HepG2 (cell line): ENCODE measurements at regions of chr9 and their contacts with region 1.

Region 1: DNA sequence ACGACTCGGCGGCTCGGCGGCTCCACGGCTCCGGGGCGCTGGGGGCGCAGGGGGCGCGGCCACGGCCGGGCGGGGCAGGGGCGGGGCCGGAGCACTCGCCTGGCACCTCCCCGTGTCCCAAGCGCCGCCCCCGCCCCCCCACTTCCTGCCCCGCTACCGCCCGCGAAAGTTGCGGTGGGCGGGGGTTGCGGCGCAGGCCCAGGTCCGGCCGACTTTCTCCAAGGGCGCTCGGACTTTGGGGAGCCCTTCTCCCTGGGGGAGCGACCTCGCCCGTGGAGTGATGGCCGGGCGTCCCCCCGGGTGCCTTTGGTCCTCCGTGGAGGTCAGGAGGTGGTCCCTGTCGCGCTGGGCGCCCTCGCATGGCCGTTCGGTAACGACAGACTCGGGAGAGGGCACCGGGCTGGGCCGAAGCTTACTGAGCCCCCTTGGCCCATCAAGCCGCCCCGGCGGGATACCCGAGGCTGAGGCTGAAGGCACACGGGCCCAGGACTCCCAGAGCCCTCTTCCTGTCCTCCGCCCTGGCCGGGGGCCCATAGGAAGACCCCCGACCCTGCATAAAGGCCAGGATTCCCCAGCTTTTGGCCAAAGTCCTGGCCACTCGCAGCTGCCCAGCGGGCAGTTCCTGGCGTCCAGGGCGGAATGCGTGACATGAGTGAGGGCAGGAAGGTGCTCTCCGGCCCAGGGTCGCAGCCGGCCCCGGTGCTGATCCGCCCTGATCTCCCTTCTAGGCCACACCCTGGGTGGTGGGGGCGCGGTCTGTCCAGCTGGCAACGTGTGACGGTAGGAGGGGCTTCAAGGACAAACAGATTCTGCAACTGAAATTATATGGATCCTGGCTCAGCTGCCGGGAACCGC is 883 bp upstream of the VAV2 start:
- DNase-seq: peak; percentile 77
- ATAC-seq: peak; percentile 55
- H3K4me3 ChIP-seq: peak overlapping the region; percentile 80 to 98 (median 97)
- H3K27ac ChIP-seq: peak overlapping the region; percentile 79
- H3K4me1 ChIP-seq: peaks cover 50% of the 10 kb centered on the region
- H3K27me3 ChIP-seq: no peaks in the 10 kb centered on the region
- CTCF ChIP-seq: peak; percentile 79
- EP300 ChIP-seq: no peak
- POLR2A ChIP-seq: peak in 1 of 2 experiments; percentile 54; a peak in 2 of 4 replicates
- RAD21 ChIP-seq: peak; percentile 70

Region 2: DNA sequence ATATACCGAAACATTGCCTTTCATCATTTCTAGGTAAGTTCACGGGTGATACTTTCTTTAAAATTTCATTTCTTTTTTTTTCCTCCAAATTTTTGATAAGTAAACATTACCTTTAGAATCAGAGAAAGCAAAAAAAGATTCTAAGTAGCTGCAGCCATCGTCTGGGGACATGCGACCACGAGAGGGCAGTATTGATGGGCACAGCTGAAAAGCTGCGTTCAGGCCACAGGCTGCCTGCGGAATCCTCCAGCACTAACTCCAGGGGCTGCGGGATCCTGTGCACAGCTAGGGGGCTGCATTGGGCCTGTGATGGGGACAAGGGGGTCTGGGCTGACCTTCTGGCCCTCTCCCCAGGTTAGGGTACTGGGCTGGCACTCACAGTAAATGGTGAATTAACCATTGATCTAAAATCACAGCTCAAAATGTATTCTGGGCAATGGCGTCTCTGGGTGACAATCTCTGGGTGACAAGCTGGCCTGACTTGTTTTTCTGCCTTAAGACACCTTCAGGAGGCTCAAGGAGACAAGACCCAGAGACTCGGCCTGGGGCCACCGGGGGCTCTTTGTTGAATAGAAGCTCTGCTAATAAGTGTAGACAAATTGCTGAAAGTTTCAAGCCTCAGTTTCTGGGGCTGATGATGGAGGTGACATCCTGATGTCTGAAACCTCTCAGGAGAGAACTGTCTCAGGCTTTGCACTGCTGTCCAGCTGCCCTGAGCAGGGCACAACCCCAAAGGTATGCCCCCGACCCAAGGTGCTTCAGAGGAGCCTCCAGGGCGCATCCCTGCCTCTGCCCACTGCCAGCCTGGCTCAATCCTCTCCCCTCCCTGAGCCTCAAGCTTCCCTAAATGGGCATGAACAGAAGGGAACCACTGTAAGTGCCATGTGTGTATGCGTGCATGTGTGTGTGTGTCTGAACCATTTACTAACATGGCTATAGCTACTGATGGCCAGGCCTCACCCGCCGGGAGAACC is 210.6 kb before region 1 on chr9:
- CTCF ChIA-PET with region 1: interaction called, 27 read pairs
- POLR2A ChIA-PET with region 1: interaction called, 5 read pairs
- in situ Hi-C with region 1: loop called (anchors 5 kb)
- intact Hi-C with region 1: loop called (anchors 1 kb)
- DNase-seq: peak; percentile 34
- ATAC-seq: peak; percentile 61
- H3K4me3 ChIP-seq: no peak overlapping the region
- H3K27ac ChIP-seq: no peak overlapping the region
- H3K4me1 ChIP-seq: no peaks in the 10 kb centered on the region
- H3K27me3 ChIP-seq: no peaks in the 10 kb centered on the region
- CTCF ChIP-seq: peak; percentile 81
- EP300 ChIP-seq: no peak
- POLR2A ChIP-seq: no peak
- RAD21 ChIP-seq: peak; percentile 69

Region 3: DNA sequence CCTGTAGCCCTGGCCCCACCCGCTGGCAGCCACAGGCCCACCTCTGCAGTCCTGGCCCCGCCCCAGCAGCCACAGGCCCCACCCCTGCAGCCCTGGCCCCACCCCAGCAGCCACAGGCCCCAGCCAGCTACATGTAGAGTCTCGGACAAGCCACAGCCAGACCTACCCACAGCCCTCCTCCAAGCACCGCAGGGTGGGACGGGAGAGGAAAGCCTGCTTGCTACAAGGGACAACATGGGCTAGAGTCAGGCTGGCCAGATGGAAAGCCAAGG is 205.3 kb before region 1 on chr9:
- CTCF ChIA-PET with region 1: interaction called, 40 read pairs
- POLR2A ChIA-PET with region 1: interaction called, 6 read pairs
- in situ Hi-C with region 1: loop called (anchors 5 kb)
- intact Hi-C with region 1: loop called (anchors 1 kb)
- DNase-seq: no peak
- ATAC-seq: no peak; the same call in 2 of the 3 replicates
- H3K4me3 ChIP-seq: no peak overlapping the region
- H3K27ac ChIP-seq: no peak overlapping the region
- H3K4me1 ChIP-seq: peaks cover 25% of the 10 kb centered on the region
- H3K27me3 ChIP-seq: no peaks in the 10 kb centered on the region
- CTCF ChIP-seq: no peak
- EP300 ChIP-seq: no peak
- POLR2A ChIP-seq: no peak
- RAD21 ChIP-seq: no peak

Region 4: DNA sequence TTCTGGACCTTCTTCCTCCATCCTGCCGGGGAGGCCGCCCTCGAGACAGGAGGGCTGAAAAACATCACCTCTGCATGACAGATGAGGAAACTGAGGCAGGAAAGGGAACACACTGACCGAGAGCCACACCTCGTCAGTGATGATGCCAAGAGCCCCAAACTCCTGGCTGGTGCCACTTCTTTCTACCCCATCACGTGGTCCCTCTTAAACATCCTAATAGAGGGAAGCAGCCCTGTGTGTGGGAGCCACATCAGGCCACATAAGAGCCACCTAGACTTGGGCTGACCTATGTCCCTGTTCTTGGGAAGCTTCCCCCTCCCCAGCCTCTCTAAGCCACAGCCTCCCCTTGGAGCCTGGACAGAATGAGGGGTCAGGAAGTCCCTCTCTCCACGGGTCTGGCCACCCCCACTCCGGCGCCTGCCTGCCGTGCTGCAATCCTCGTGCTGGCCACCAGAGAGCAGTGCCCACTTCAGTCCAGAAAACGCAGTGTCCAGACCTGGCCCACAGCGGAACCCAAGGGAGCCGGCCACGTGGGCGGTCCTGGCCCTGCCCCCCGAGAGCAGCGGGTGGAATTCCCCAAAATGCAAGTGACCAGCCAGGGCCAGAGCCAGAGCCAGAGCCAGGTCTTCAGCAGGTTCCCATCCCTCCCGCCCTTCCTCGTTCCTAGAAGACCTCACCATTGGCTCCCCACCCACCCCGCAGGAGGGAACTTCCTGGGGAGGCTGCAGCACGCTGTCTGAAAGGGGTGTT is 200.1 kb before region 1 on chr9:
- CTCF ChIA-PET with region 1: interaction called, 40 read pairs
- POLR2A ChIA-PET with region 1: interaction called, 6 read pairs
- in situ Hi-C with region 1: loop called (anchors 5 kb)
- intact Hi-C with region 1: loop called (anchors 1 kb)
- DNase-seq: peak; percentile 27
- ATAC-seq: peak; percentile 53
- H3K4me3 ChIP-seq: no peak overlapping the region
- H3K27ac ChIP-seq: no peak overlapping the region
- H3K4me1 ChIP-seq: peaks cover 35% of the 10 kb centered on the region
- H3K27me3 ChIP-seq: no peaks in the 10 kb centered on the region
- CTCF ChIP-seq: peak; percentile 90
- EP300 ChIP-seq: no peak
- POLR2A ChIP-seq: no peak
- RAD21 ChIP-seq: peak; percentile 88

Region 5: DNA sequence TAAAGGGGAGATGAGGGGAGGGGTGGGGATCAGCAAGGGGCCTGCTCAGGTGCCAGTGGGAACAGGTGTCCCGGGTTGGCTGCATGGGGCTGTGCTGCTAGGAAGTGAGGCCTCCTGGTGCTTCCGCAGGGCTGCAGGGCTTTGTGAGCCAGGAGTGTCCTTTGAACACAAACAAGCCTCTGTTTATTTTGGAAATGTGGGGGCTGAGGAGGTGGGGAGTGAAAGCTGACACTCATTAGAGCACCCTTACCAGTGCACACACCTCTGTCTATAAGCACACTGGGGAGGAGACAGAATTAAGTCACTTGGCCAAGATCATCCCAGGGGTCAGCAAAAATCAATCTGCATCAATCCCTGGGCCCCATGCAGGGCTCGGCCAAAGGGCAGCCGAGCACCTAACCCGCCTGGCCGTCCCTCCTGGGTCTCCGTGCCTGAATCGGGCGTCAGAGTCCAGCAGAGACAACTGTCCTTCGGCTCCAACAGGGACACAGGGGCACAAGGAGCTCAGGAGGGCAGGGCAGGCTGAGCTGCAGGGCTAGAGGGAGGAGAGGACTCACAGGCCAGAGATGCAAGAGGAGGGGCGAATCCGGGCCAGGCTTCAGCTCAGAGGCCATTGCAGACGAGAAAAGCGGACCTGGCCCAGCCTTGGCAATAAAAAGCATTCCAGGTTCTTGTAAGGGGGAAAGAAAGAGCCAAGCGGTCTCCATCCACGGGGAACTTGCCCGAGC is 100.7 kb before region 1 on chr9:
- CTCF ChIA-PET with region 1: no interaction called
- POLR2A ChIA-PET with region 1: interaction called, 11 read pairs
- in situ Hi-C with region 1: no loop called
- intact Hi-C with region 1: no loop called
- DNase-seq: peak; percentile 99
- ATAC-seq: peak; percentile 88
- H3K4me3 ChIP-seq: peak overlapping the region; percentile 3 to 54 (median 9); a peak in 4 of 6 replicates
- H3K27ac ChIP-seq: peak overlapping the region; percentile 96
- H3K4me1 ChIP-seq: peaks cover 89% of the 10 kb centered on the region
- H3K27me3 ChIP-seq: no peaks in the 10 kb centered on the region
- CTCF ChIP-seq: peak; percentile 37; the same call in 1 of the 2 replicates
- EP300 ChIP-seq: peak; percentile 91 to 96
- POLR2A ChIP-seq: peak in 1 of 2 experiments; percentile 82; a peak in 2 of 4 replicates
- RAD21 ChIP-seq: peak; percentile 82

Region 6: DNA sequence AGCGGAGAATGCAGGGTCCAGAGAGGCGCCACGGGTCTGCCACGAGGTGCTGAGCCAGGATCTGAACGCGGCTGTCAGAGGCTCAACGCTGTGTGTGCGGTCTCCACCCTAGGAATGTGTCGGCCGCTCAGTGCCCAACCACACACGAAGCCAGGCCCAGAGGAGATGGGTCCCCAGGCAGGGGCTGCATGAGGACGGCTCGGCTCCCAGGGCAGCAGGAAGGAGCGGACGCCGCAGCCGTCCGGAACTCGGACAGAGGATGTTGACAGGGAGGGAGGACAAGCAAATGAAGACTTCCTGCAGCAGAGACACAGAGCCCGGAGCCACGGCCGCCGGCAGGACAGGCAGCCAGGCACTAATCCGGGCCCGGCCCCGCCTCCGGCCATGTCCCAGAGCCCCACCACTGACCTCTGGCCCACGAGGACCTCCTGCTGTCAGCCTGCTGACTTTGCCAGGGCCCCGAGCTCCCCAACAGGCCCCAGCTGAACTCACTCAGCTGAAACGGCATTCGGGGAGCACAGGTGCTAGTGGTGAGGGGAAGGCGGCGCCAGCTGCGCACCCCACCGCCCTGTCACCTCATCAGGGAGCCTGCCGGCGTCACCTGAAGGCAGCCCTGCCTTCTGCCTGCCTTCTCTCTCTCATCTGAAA is 13.6 kb before region 1 on chr9:
- CTCF ChIA-PET with region 1: no interaction called
- POLR2A ChIA-PET with region 1: interaction called, 24 read pairs
- in situ Hi-C with region 1: no loop called
- intact Hi-C with region 1: loop called (anchors 1 kb)
- DNase-seq: peak; percentile 80
- ATAC-seq: peak; percentile 81
- H3K4me3 ChIP-seq: peak overlapping the region; percentile 48 to 73 (median 48)
- H3K27ac ChIP-seq: peak overlapping the region; percentile 92
- H3K4me1 ChIP-seq: peaks cover 78% of the 10 kb centered on the region
- H3K27me3 ChIP-seq: no peaks in the 10 kb centered on the region
- CTCF ChIP-seq: peak; percentile 65
- EP300 ChIP-seq: peak in 1 of 2 experiments; percentile 46; a peak in 1 of 4 replicates
- POLR2A ChIP-seq: no peak
- RAD21 ChIP-seq: peak; percentile 20